Activated naive CD4-positive, alpha-beta T cell treated with anti-CD3 and anti-CD28 coated beads for 36 hours (primary cell): ENCODE measurements at regions of chr20 and their contacts with region 1.

Region 1: DNA sequence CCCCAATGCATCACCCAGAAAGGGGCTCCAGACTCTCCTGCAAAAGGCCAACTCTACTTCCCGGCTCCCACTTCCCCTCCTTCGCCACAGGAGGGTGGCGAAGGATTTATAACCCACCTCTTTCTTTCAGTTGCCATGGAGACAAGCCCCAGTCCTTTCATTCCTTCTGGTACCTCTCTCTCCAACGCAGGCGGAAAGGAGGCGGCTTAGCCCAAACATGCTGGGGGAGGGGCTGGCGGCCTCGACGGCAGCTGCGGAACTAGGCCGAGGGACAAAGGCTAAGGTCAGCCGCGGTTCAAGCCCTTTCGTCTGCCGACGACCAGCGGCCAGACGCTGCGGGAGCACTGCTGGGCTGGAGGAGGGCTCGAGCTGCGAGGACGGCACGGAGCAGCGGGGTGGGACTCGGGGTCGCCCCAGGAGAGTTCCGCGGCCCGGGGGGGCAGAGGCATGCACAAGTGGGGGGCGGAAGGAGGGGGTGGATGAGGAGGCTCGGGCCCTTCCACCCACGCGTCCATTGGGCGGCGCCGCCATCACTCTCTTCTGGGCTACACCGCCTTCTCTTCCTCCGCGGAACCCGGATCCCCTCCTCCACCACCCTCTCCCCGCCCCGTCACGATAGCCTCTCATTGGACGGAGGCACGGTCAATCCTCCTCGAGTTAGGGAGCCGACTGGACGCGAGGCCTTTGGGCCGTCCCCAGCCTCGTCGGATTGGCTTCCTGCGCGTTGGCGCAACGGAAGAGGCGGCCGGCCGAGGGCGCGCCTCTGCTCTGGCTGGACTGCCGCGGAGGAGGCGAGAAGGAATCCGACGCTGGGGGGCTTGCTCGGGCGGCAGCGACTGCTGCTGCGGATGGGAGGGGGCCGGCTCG is at the start of gene PANK2:
- DNase-seq: peak; percentile 100
- H3K4me3 Mint-ChIP-seq: peak within 1 kb of the TSS; percentile 98
- H3K27ac Mint-ChIP-seq: peak within 1 kb of the TSS; percentile 96
- H3K4me1 Mint-ChIP-seq: peaks cover 42% of the 10 kb centered on the region
- H3K27me3 Mint-ChIP-seq: no peaks in the 10 kb centered on the region
- total RNA-seq, gene PANK2: 39.8 to 44.7 TPM

Region 2: GRCh38 chr20:3811467-3812258 is 77.2 kb before region 1 on chr20:
- CTCF ChIA-PET with region 1: interaction called, 5 read pairs
- intact Hi-C with region 1: loop called (anchors 1 kb)
- DNase-seq: peak; percentile 97
- H3K4me3 Mint-ChIP-seq: peak overlapping the region; percentile 86
- H3K27ac Mint-ChIP-seq: peak overlapping the region; percentile 97
- H3K4me1 Mint-ChIP-seq: peaks cover 70% of the 10 kb centered on the region
- H3K27me3 Mint-ChIP-seq: no peaks in the 10 kb centered on the region

Region 3: GRCh38 chr20:3846740-3847428 is 42.0 kb before region 1 on chr20 and contains the start of gene MAVS:
- CTCF ChIA-PET with region 1: interaction called, 4 read pairs
- intact Hi-C with region 1: loop called (anchors 1 kb)
- DNase-seq: peak; percentile 84
- H3K4me3 Mint-ChIP-seq: peak within 1 kb of the TSS; percentile 85
- H3K27ac Mint-ChIP-seq: peak within 1 kb of the TSS; percentile 83
- H3K4me1 Mint-ChIP-seq: peaks cover 29% of the 10 kb centered on the region
- H3K27me3 Mint-ChIP-seq: no peaks in the 10 kb centered on the region
- total RNA-seq, gene MAVS: 14.8 to 16.0 TPM

Region 4: DNA sequence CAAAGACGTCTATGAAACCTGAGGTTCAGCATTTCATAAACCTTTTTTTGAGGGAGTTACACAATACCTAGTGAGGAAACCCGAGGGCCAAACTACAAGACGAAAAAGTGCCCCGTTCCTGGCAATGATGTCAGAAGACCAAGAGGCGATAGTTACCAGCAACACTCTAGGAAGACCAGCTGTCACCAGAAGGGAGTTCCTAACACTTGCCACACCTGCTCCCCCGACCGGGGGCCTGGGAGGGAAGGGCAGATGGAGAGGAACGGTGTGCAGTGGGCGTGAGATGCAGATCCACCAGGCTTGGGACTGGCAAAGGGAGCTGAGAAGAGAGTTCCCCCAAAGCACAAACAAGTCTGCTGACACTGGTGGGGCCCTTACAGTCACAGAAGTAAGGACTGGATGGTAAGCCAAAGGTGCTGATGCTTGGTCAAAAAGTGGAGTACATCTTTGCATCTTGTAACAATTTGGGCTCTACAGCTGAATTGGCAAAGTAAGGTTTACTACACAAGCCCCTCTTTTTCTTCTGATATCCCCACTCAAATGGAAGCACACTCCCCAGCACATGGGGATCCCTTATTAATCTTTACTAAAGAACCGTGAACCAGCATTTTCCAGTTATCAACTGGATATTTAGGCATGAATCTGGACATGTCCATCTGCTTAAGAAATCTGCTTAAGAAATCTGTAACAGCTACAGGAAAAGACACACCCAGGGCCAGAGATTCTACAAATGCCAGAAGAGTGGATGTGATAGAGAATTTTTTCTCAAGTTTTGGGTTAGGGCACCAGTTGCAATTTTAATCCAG is 38.8 kb after region 1 on chr20:
- CTCF ChIA-PET with region 1: no interaction called
- intact Hi-C with region 1: loop called (anchors 5 kb)
- DNase-seq: no peak
- H3K4me3 Mint-ChIP-seq: no peak overlapping the region
- H3K27ac Mint-ChIP-seq: peak overlapping the region; percentile 51
- H3K4me1 Mint-ChIP-seq: peaks cover 49% of the 10 kb centered on the region
- H3K27me3 Mint-ChIP-seq: no peaks in the 10 kb centered on the region

Region 5: DNA sequence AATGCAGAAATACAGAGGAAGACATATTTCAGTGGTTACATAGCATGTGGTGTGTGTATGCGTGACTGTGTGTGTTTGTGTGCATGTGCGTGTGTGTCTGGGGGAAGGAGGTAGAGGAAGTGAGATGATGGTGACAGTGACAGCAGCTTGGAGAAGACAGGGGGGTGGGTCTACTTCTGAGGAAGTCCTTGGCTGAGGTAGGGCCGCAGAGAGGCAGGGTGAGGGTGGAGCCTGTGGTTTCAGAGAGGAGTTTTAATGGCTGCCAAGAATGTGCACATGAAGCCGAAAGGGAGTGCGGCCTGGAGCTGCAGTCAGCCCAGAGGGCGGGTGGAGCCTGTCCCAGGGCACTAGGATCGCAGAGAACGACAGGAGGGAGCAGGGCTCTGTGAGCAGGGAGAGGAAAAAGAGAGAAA is 149.2 kb after region 1 on chr20:
- CTCF ChIA-PET with region 1: no interaction called
- intact Hi-C with region 1: loop called (anchors 1 kb)
- DNase-seq: peak; percentile 90
- H3K4me3 Mint-ChIP-seq: peak overlapping the region; percentile 82
- H3K27ac Mint-ChIP-seq: peak overlapping the region; percentile 95
- H3K4me1 Mint-ChIP-seq: peaks cover 15% of the 10 kb centered on the region
- H3K27me3 Mint-ChIP-seq: no peaks in the 10 kb centered on the region